ENCODE measurements at regions of chr19 and their contacts with region 1.

Region 1: DNA sequence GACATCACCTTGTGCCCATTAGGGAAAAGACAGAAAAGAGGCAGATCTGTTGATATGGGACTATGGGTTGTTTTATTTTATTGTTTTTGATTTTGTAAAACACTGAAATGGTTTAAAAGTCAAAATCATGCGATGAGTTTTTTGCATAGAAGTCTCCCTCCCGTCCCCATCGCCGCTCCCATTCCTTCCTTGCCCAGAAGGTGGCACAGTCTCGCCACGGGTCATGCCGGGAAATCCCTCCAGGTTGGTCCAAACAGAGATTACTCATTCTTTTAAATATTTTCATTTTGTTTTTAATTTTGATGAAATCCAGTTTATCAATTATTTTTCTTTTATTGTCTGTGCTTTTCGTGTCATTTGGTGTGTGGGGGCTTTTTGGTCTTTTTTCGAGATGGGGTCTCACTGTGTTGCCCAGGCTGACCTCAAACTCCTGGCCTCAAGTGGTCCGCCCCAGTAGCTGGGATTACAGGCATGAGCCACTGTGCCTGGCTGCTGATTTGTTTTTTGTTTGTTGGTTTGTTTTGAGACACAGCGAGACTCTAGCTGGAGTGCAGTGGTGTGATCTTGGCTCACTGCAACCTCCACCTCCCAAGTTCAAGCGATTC is 9.2 kb downstream of the PGPEP1 start:
- DNase-seq: no peak
- H3K4me3 ChIP-seq: no peak overlapping the region
- H3K27ac ChIP-seq: no peak overlapping the region
- H3K4me1 ChIP-seq: no peaks in the 10 kb centered on the region
- H3K27me3 ChIP-seq: no peaks in the 10 kb centered on the region
- CTCF ChIP-seq: peak; percentile 62 to 80 (median 75)

Region 2: DNA sequence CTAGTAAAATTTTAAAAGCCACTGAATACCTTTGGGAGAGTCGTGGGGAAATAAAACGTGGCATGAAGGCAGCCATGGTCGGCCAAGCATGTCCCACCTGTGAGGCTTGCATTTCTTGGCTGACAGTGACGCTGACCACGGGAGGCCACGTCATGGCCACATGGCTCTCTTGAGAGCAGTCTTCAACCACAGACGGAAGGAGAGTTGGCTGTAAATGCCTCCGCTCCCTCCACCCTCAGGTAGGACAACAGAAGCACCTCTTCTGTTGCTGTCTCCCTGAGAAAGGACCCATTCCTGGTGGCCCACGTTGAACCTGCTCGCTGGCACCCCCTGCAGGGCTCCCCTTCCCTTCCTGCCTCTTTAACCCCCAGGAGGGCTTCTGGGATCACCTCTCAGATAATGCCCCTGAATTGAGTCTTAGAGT is 58.4 kb after region 1 on chr19:
- intact Hi-C with region 1: loop called (anchors 1 kb)
- DNase-seq: no peak
- H3K4me3 ChIP-seq: no peak overlapping the region
- H3K27ac ChIP-seq: no peak overlapping the region
- H3K4me1 ChIP-seq: no peaks in the 10 kb centered on the region
- H3K27me3 ChIP-seq: no peaks in the 10 kb centered on the region
- CTCF ChIP-seq: peak in 1 of 3 experiments; percentile 33

Region 3: GRCh38 chr19:18683213-18683939 is 333.8 kb after region 1 on chr19 and contains the start of gene CRTC1:
- intact Hi-C with region 1: no loop called
- DNase-seq: peak in 1 of 2 donors; percentile 92
- H3K4me3 ChIP-seq: peak within 1 kb of the TSS; percentile 68 to 73
- H3K27ac ChIP-seq: peak within 1 kb of the TSS; percentile 62 to 74
- H3K4me1 ChIP-seq: peaks cover 8 to 18% of the 10 kb centered on the region in 2 donors
- H3K27me3 ChIP-seq: no peaks in the 10 kb centered on the region
- CTCF ChIP-seq: peak in 1 of 3 experiments; percentile 2
- total RNA-seq, gene CRTC1: 10.0 TPM

Measured in ascending aorta (tissue), 2 donors.